ENCODE measurements at regions of chr9 and their contacts with region 1.

Region 1: GRCh38 chr9:90219548-90220118 is 423.0 kb downstream of the DIRAS2 start:
- DNase-seq: peak; percentile 64
- CTCF ChIP-seq: peak; percentile 57

Region 2: DNA sequence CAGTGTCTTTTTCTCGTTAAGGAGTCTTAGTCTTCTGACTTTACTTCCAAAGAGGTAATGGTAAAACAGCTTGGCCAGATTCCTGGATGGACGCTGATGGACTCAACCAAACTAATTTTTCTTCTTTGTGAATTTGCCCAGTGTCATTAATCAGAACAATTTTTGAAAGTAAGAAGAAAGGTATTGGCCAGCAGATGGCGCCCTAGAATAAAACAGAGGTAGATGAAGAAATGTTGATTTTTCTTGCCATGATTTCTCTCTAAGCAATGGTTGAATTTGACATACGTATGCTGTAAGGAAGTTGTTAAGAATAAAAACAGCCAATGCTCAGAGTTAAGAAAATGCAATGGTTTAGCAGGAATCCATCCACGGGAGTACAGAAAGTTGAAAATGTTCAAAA is 77.1 kb before region 1 on chr9:
- in situ Hi-C with region 1: loop called (anchors 10 kb)
- DNase-seq: peak; percentile 36
- CTCF ChIP-seq: peak; percentile 31

Region 3: DNA sequence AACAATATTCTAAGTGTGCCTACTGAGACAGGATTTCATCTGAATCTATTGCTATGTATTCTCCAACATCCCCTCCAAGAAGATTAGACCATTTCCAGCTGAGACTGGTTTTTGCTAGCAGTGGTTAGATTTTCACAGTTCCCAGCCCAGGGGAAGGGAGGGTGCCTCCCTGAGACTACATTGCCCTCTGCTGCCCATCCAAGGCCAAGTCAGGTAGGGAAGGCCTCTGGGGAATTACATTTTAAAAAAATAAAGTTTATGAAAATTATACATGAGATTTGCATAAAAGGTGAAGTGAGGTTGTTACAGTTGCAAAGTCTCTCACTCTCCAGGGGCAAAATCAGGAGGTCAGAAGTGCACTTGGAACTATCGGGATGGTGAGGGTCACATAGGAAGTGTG is 554.0 kb after region 1 on chr9:
- in situ Hi-C with region 1: loop called (anchors 25 kb)
- DNase-seq: peak; percentile 20
- CTCF ChIP-seq: peak; percentile 27

Region 4: GRCh38 chr9:90815183-90815943 is 595.7 kb after region 1 on chr9:
- in situ Hi-C with region 1: no loop called
- DNase-seq: no peak
- CTCF ChIP-seq: no peak

Region 5: GRCh38 chr9:90860826-90861225 is 641.2 kb after region 1 on chr9:
- in situ Hi-C with region 1: no loop called
- DNase-seq: no peak
- CTCF ChIP-seq: no peak

Measured in GM13976 (cell line).